Heart left ventricle (tissue), 16 donors: ENCODE measurements at regions of chr4 and their contacts with region 1.

Region 1: GRCh38 chr4:1167247-1167949 is 5.0 kb downstream of the SPON2 start:
- DNase-seq: peak; percentile 80 to 90 (median 81)
- ATAC-seq: peak; percentile 62 to 90 (median 84)
- H3K4me3 ChIP-seq: peak overlapping the region; percentile 6 to 72 (median 58)
- H3K27ac ChIP-seq: peak overlapping the region in 3 of 12 donors; percentile 4 to 55 (median 15)
- H3K4me1 ChIP-seq: peaks cover 0 to 52% (median 21%) of the 10 kb centered on the region in 12 donors
- H3K27me3 ChIP-seq: peaks cover 7 to 32% (median 21%) of the 10 kb centered on the region in 9 donors
- CTCF ChIP-seq: peak; percentile 81 to 96 (median 92)
- POLR2A ChIP-seq: no peak

Region 2: DNA sequence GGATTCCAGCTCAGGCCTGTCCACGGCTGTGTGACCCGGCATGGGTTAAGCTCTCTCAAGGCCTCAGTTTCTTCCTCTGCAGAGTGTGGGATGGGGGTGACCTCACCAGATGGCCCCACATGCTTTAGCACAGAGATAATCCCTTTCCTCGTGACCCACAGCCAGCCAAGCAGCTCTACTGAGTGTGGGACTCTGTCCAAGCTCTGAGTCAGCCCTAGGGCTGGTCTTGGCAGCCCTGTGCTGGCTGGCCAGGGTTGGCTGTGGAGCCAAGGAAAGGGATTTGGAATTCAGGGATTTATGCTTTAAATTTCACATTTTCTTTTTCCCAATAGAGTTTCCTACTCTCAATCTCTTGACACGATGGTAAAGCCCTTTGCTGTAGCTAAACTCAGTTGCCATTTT is 24.7 kb after region 1 on chr4:
- intact Hi-C with region 1: loop called in 1 of 10 experiments (anchors 2 kb)
- DNase-seq: peak; percentile 83 to 93 (median 89)
- ATAC-seq: peak; percentile 92 to 97 (median 96)
- H3K4me3 ChIP-seq: no peak overlapping the region
- H3K27ac ChIP-seq: peak overlapping the region; percentile 47 to 90 (median 84)
- H3K4me1 ChIP-seq: peaks cover 9 to 41% (median 31%) of the 10 kb centered on the region in 12 donors
- H3K27me3 ChIP-seq: no peaks in the 10 kb centered on the region
- CTCF ChIP-seq: no peak
- POLR2A ChIP-seq: no peak

Region 3: DNA sequence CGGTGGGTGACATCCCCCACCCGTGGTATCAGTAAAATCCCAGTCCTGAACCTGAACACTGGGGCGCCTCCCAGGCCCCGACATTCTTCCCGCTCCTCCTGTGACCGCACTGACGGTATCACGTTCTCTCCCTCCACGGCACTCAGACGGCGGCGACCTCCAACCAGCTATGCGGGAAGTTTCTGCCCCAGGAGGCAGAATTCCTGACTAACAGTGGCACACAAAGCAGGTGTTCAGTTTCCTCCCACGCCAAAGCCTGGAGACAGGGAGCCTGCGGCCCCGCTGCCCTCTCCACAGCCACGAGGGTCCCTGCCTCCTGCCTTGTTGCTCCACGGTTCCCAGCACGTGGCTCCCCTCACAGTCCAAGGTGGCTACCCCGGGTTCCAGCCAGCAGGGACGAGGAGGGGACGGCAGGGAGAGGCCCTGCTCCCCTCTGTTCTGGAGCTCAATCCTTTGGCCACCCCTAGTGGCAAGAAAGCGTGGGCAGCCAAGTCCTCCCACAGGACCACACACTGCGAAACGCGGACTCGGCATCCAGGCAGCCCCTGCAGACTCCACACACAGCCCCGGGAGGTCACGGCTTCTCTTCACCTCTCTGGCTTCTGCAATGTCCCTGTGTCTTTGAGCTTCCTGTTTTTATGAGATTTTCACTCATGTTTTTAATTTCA is 66.4 kb after region 1 on chr4:
- intact Hi-C with region 1: loop called in 1 of 10 experiments (anchors 5 kb)
- DNase-seq: peak in 2 of 5 donors; percentile 45 to 61
- ATAC-seq: peak; percentile 22 to 53 (median 48)
- H3K4me3 ChIP-seq: no peak overlapping the region
- H3K27ac ChIP-seq: peak overlapping the region in 11 of 12 donors; percentile 9 to 78 (median 50)
- H3K4me1 ChIP-seq: peaks cover 0 to 31% (median 23%) of the 10 kb centered on the region in 12 donors
- H3K27me3 ChIP-seq: no peaks in the 10 kb centered on the region
- CTCF ChIP-seq: peak in 10 of 12 donors; percentile 17 to 53 (median 35)
- POLR2A ChIP-seq: no peak

Region 4: DNA sequence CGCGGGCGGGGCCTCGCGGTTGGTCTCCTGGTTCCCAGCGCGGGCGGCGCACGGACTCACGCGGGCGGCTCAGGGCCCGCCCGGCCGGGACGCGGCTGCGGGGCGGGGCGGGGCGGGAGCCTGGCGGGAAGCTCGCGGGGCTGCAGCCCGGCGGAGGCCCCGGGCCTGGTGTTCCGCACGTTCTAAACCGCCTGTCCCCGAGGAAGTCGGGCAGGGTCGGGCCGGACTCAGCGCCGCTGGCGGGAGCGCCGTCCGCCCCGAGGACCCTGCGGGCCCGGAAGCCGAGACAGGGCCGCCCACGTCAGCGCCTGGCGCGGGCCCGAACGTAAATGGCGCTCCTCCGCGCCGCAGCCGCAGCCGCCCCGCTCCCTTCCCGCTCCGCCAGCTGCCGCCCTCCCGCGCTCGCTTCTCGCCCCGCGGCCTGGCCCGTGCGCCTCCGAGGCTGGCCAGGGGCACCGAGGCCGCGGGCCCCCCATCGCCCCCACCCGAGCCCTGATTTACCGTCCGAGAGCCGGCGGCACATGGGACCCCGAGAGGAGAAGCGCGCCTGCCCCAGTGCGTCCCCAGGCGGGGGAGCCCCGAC is 81.8 kb after region 1 on chr4:
- intact Hi-C with region 1: loop called (anchors 1 to 10 kb)
- DNase-seq: peak; percentile 89 to 93 (median 91)
- ATAC-seq: peak; percentile 25 to 69 (median 68)
- H3K4me3 ChIP-seq: peak overlapping the region; percentile 39 to 94 (median 78)
- H3K27ac ChIP-seq: peak overlapping the region; percentile 91 to 100 (median 98)
- H3K4me1 ChIP-seq: peaks cover 7 to 54% (median 49%) of the 10 kb centered on the region in 12 donors
- H3K27me3 ChIP-seq: no peaks in the 10 kb centered on the region
- CTCF ChIP-seq: peak in 1 of 12 donors; percentile 13
- POLR2A ChIP-seq: peak in 1 of 2 donors; percentile 63

Region 5: GRCh38 chr4:1346781-1347409 is 179.5 kb after region 1 on chr4 and contains the start of gene UVSSA:
- intact Hi-C with region 1: loop called in 3 of 10 experiments (anchors 2 to 10 kb)
- DNase-seq: peak; percentile 100
- ATAC-seq: peak; percentile 95 to 99 (median 97)
- H3K4me3 ChIP-seq: peak within 1 kb of the TSS; percentile 80 to 98 (median 90)
- H3K27ac ChIP-seq: peak within 1 kb of the TSS; percentile 95 to 100 (median 98)
- H3K4me1 ChIP-seq: peaks cover 0 to 30% (median 20%) of the 10 kb centered on the region in 12 donors
- H3K27me3 ChIP-seq: no peaks in the 10 kb centered on the region
- CTCF ChIP-seq: peak in 1 of 12 donors; percentile 24
- POLR2A ChIP-seq: peak; percentile 77 to 95
- total RNA-seq, gene UVSSA: 5.0 to 14.2 (median 6.7) TPM

Region 6: GRCh38 chr4:1899149-1900086 is 732.0 kb after region 1 on chr4:
- intact Hi-C with region 1: no loop called
- DNase-seq: peak; percentile 66 to 78 (median 67)
- ATAC-seq: peak; percentile 71 to 93 (median 87)
- H3K4me3 ChIP-seq: no peak overlapping the region
- H3K27ac ChIP-seq: no peak overlapping the region
- H3K4me1 ChIP-seq: peaks cover 0 to 14% (median 0%) of the 10 kb centered on the region in 12 donors
- H3K27me3 ChIP-seq: no peaks in the 10 kb centered on the region
- CTCF ChIP-seq: peak; percentile 72 to 96 (median 89)
- POLR2A ChIP-seq: no peak